ENCODE measurements at regions of chr15 and their contacts with region 1.

Region 1: GRCh38 chr15:45166834-45167630 is 20.7 kb downstream of the SHF start:
- DNase-seq: peak; percentile 89 to 93
- ATAC-seq: peak; percentile 83 to 94 (median 90)
- H3K4me3 ChIP-seq: peak overlapping the region; percentile 71
- H3K27ac ChIP-seq: peak overlapping the region; percentile 95
- H3K4me1 ChIP-seq: no peaks in the 10 kb centered on the region
- H3K27me3 ChIP-seq: no peaks in the 10 kb centered on the region
- CTCF ChIP-seq: peak; percentile 54

Region 2: DNA sequence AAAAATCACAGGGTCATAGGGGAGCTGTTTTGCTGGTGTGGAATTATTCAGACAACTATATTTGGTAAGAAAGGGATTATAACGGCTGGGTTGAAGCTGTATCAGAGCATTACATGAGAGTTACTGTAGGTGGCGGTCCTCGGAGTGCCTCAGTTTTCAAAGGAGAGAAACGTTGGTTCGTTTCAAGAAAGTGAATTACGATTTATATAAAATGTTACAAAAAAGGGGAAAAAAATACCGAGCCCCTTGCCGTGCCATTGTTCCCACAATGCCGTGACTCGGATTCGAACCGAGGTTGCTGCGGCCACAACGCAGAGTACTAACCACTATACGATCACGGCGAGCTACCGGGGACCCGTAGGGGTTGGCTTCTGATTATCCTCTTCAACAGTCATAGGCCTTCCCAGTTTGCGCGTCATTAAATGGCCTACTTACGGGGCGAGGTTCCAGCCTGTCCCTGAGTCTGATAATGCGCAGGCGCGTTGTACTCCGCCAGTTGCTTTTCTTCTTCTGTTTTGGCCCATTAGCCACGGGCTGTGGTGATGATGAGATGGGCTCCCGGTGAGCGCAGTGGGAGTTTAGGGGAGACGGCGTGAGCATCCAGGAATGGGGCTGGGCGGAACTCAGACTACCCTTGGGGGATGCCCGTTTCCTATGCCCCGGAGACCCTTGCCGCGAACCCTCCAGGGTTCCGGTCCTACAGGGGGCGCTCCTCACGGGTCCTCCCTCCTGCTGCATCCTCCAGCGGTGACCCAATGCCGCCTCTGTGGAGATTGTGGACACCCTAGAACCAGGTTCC is 31.5 kb after region 1 on chr15:
- intact Hi-C with region 1: loop called in 1 of 2 experiments (anchors 2 kb)
- DNase-seq: peak; percentile 92 to 96
- ATAC-seq: peak; percentile 79 to 83 (median 81)
- H3K4me3 ChIP-seq: peak overlapping the region; percentile 91
- H3K27ac ChIP-seq: peak overlapping the region; percentile 99
- H3K4me1 ChIP-seq: peaks cover 3% of the 10 kb centered on the region
- H3K27me3 ChIP-seq: no peaks in the 10 kb centered on the region
- CTCF ChIP-seq: peak; percentile 68

Region 3: GRCh38 chr15:45279024-45279698 is 112.1 kb after region 1 on chr15:
- intact Hi-C with region 1: loop called in 1 of 2 experiments (anchors 2 kb)
- DNase-seq: peak; percentile 97 to 99
- ATAC-seq: peak; percentile 100
- H3K4me3 ChIP-seq: peak overlapping the region; percentile 89
- H3K27ac ChIP-seq: peak overlapping the region; percentile 87
- H3K4me1 ChIP-seq: peaks cover 11% of the 10 kb centered on the region
- H3K27me3 ChIP-seq: no peaks in the 10 kb centered on the region
- CTCF ChIP-seq: no peak

Region 4: DNA sequence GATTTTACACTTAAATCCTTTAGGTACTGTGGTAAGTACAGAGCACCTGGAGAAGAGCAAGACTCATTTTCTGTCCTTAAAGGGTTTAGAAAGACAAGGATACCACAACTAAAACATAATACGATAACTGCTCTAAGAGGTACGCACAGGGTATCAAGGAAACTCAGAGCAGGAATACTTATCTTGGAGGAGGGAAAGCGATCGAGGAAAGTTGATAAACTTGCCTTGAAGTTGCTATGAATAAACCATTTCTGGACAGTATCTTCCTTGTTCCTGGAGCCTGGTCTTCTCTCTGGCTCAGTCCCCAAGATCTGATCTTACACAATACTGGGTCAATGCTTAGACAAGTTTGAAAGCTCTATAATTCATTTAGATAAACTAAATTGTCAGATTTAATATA is 228.9 kb after region 1 on chr15:
- intact Hi-C with region 1: loop called (anchors 2 kb)
- DNase-seq: no peak
- ATAC-seq: no peak
- H3K4me3 ChIP-seq: no peak overlapping the region
- H3K27ac ChIP-seq: no peak overlapping the region
- H3K4me1 ChIP-seq: peaks cover 1% of the 10 kb centered on the region
- H3K27me3 ChIP-seq: no peaks in the 10 kb centered on the region
- CTCF ChIP-seq: no peak

Region 5: DNA sequence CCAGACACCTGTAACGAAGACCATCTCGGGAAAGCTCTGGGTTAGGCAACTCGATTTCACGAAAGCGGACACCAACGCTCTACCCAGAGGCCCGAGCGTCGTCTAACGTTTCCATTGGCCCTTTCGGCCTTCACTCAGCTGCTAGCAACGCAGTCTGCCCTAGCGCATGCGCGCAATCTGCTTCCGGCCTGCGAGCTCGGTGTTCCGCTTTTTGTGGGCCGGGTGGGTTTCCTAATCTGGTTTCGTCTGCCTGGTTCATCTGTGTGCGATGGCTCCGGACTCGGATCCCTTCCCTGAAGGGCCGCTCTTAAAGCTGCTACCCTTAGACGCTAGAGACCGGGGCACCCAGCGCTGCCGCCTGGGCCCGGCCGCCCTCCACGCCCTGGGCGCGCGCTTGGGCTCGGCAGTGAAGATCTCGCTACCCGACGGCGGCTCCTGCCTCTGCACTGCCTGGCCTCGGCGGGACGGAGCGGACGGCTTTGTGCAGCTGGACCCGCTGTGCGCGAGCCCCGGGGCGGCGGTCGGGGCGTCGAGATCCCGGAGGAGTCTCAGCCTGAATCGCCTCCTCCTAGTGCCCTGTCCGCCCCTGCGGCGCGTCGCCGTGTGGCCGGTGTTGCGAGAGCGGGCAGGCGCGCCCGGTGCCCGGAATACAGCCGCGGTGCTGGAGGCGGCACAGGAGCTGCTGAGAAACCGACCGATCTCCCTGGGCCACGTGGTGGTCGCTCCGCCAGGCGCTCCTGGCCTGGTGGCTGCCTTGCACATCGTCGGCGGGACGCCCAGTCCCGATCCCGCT is 235.3 kb after region 1 on chr15:
- intact Hi-C with region 1: loop called (anchors 2 kb)
- DNase-seq: peak; percentile 97 to 99
- ATAC-seq: peak; percentile 96 to 97 (median 97)
- H3K4me3 ChIP-seq: peak overlapping the region; percentile 88
- H3K27ac ChIP-seq: peak overlapping the region; percentile 94
- H3K4me1 ChIP-seq: peaks cover 27% of the 10 kb centered on the region
- H3K27me3 ChIP-seq: no peaks in the 10 kb centered on the region
- CTCF ChIP-seq: no peak

Region 6: GRCh38 chr15:45457641-45458433 is 290.8 kb after region 1 on chr15:
- intact Hi-C with region 1: loop called (anchors 2 to 5 kb)
- DNase-seq: peak in 1 of 2 donors; percentile 42
- ATAC-seq: peak; percentile 84 to 93 (median 85)
- H3K4me3 ChIP-seq: peak overlapping the region; percentile 66
- H3K27ac ChIP-seq: peak overlapping the region; percentile 74
- H3K4me1 ChIP-seq: peaks cover 4% of the 10 kb centered on the region
- H3K27me3 ChIP-seq: no peaks in the 10 kb centered on the region
- CTCF ChIP-seq: peak; percentile 79

Region 7: DNA sequence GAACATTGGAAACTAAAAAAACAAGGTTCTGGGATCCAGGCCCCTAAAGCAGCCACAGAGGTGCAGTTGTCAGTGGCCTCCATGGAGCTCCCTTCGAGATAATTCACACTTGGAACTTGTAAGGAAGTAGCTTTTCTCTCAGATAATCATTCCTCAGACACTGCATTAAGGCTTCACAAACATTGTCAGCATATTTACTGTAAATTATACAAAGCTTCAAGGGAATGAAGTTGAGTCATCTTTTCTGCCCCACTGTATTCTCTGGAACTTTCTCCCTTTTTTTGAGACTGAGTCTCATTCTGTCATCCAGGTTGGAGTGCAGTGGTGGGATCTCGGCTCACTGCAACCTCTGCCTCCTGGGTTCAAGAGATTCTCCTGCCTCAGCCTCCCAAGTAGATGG is 427.3 kb after region 1 on chr15:
- intact Hi-C with region 1: loop called in 1 of 2 experiments (anchors 10 kb)
- DNase-seq: no peak
- ATAC-seq: no peak
- H3K4me3 ChIP-seq: no peak overlapping the region
- H3K27ac ChIP-seq: no peak overlapping the region
- H3K4me1 ChIP-seq: peaks cover 18% of the 10 kb centered on the region
- H3K27me3 ChIP-seq: no peaks in the 10 kb centered on the region
- CTCF ChIP-seq: no peak

Measured in psoas muscle (tissue), 8 donors.